ENCODE measurements at regions of chr4 and their contacts with region 1.

Region 1: DNA sequence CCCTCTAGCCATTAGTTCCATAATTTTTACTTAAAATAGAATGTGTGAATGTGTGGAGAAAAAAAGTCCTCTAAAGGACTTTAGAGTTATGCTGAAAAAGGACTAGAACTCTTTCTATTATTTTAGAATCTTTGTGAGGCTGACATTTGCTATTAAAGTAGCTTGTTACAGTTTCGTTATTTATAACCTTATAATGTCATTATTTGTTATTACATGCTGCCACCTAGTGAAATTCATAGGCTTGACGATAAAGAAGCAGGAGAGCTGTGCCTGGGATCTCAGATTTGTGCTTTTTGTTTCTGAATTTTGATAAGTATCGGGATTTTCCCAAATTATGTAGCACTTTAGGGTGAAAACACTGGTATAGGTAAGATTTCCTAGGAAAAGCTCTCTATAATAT is 38.5 kb upstream of the TAPT1 start:
- DNase-seq: peak in 1 of 35 experiments; percentile 66
- ATAC-seq: peak in 2 of 4 experiments; percentile 50 to 56
- H3K4me3 ChIP-seq: no peak overlapping the region
- H3K4me3 Mint-ChIP-seq: no peak overlapping the region
- H3K27ac ChIP-seq: no peak overlapping the region
- H3K27ac Mint-ChIP-seq: no peak overlapping the region
- H3K4me1 ChIP-seq: peaks cover 0 to 2% of the 10 kb centered on the region in 2 experiments
- H3K4me1 Mint-ChIP-seq: peaks cover 5 to 15% (median 10%) of the 10 kb centered on the region in 3 donors
- H3K27me3 ChIP-seq: no peaks in the 10 kb centered on the region
- H3K27me3 Mint-ChIP-seq: no peaks in the 10 kb centered on the region

Region 2: DNA sequence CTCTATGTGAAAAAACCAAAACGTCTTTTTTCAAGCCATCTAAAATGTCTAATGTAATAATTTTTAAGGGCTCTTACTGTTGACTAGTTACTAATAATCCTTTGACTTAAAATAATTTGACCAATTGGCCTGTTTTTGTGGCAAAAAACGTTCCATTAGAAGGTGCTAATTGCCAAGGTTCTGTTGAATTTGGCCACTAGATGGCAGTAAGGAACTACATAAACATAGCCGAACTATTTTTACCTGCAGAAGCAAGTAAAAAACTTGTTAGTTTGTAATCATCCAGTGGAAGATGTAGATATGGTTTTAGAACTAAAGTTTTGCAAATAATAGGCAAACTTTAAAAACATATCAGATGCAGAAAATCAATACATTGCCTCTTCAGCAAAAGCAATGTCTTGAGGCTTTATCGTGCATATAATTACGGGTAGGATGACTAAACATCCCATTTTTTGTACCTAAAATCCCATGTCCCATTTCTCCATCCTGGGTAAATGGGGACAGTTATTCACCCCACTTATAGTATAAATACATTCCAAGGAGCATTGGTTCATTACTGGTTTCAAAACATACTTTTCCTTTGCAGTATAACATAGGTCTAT is 238.5 kb before region 1 on chr4:
- CTCF ChIA-PET with region 1: interaction called, 4 to 38 read pairs
- POLR2A ChIA-PET with region 1: no interaction called
- DNase-seq: peak in 11 of 35 experiments; percentile 3 to 79 (median 15)
- ATAC-seq: no peak
- H3K4me3 ChIP-seq: no peak overlapping the region
- H3K4me3 Mint-ChIP-seq: no peak overlapping the region
- H3K27ac ChIP-seq: no peak overlapping the region
- H3K27ac Mint-ChIP-seq: no peak overlapping the region
- H3K4me1 ChIP-seq: peaks cover 0 to 4% of the 10 kb centered on the region in 2 experiments
- H3K4me1 Mint-ChIP-seq: no peaks in the 10 kb centered on the region
- H3K27me3 ChIP-seq: peaks cover 0 to 6% of the 10 kb centered on the region in 2 experiments
- H3K27me3 Mint-ChIP-seq: peaks cover 0 to 26% of the 10 kb centered on the region in 2 donors

Measured in T-cell (primary cell).